Ascending aorta (tissue), 2 donors: ENCODE measurements at regions of chr12 and their contacts with region 1.

Region 1: GRCh38 chr12:89352492-89353187 is at the start of gene DUSP6:
- DNase-seq: peak; percentile 94 to 98
- H3K4me3 ChIP-seq: peak within 1 kb of the TSS; percentile 84 to 98
- H3K27ac ChIP-seq: peak within 1 kb of the TSS; percentile 100
- H3K4me1 ChIP-seq: peaks cover 9 to 23% of the 10 kb centered on the region in 2 donors
- H3K27me3 ChIP-seq: no peaks in the 10 kb centered on the region
- CTCF ChIP-seq: no peak
- total RNA-seq, gene DUSP6: 370 TPM

Region 2: DNA sequence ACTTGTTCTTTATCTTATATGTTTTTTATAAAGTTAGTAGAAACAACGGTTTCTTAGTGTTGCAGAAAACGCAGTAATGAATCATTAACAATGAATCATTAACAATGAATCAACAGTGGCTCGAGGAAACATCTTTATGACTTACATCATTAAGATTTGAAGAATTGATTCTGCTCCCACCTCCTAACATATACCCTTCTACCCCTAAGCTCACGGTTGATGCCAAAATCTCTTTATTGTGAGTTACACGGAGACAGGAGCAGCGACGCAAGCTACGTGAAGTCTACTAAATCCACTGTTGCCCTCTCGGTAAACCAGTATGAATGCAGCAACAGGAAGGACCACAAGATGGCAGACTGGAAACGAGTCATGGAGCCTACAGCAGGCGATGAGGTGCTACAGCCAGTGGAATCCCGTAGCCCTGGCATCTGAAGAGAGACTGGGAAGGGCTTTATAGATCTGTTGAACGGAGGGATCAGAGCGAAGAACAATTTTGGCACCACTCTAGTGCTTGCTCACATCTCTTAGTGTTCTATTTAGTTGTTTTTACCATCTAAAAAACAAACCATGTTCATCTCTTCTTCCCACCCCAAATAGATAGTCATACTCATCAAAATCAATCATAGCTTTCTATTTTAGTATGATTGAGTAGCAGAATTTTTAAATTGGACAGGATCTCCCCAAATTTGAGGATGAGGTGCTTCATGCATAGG is 333.1 kb before region 1 on chr12:
- intact Hi-C with region 1: loop called (anchors 5 kb)
- DNase-seq: peak; percentile 11 to 91
- H3K4me3 ChIP-seq: peak overlapping the region in 1 of 2 donors; percentile 53
- H3K27ac ChIP-seq: no peak overlapping the region
- H3K4me1 ChIP-seq: peaks cover 0 to 4% of the 10 kb centered on the region in 2 donors
- H3K27me3 ChIP-seq: no peaks in the 10 kb centered on the region
- CTCF ChIP-seq: peak; percentile 64 to 84 (median 82)

Region 3: DNA sequence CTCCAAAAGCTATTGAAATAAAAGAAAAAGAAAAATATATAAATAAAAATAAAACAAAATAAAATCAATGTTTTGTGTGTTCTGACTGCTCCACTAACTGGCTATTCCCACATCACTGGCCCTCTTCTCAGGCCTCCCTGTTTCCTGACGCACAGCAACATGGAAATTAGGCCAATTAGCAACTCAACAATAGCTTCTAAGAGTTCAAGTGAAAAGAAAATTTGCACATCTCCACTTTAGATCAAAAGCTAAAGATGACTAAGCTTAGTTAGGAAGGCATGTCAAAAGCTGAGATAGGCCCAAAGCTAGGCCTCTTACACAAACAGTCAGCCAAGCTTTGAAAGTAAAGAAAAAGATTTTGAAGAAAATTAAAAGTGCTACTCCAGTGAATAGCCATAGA is 201.1 kb before region 1 on chr12:
- intact Hi-C with region 1: no loop called
- DNase-seq: no peak
- H3K4me3 ChIP-seq: no peak overlapping the region
- H3K27ac ChIP-seq: no peak overlapping the region
- H3K4me1 ChIP-seq: peaks cover 0 to 5% of the 10 kb centered on the region in 2 donors
- H3K27me3 ChIP-seq: no peaks in the 10 kb centered on the region
- CTCF ChIP-seq: no peak

Region 4: GRCh38 chr12:89162704-89163261 is 189.9 kb before region 1 on chr12:
- intact Hi-C with region 1: loop called (anchors 2 kb)
- DNase-seq: peak; percentile 16 to 85
- H3K4me3 ChIP-seq: no peak overlapping the region
- H3K27ac ChIP-seq: peak overlapping the region; percentile 64 to 65
- H3K4me1 ChIP-seq: peaks cover 0 to 20% of the 10 kb centered on the region in 2 donors
- H3K27me3 ChIP-seq: no peaks in the 10 kb centered on the region
- CTCF ChIP-seq: no peak

Region 5: DNA sequence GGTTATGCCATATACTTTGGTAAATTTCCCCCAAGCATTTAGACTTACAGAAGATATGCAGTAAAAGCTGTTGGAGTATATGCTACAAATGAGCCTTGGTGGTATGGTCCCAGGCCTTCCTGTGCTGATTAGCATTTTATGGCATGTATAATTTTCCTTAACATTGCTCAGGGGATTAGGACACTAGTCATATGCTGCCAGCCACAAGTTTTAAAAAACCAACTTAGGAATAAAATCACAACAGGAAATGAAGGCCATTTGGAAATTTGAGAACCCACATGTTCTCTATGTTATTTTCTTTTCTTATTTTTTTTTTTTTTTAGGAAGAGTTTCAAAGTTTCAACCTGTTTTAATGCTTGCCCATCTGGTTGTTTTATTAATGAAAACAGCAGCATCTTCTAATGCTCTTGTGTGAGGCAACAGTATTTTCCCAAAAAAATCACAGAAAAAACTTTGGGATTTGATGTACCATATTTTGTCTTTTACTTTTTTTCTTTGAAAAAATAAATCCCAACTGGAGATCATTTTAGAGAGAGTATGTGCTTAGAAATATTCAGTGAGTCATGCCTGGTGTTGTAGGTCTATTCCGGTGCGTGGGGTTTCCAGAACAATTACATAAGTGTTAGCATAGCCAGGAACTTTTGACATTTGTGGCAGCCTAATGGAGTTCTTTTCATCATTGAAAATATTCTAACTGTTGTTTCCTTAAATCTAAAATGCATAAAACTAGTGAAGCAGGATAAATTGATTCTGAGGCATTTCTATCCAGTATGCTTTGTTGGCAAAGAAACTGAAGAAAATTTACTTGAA is 21.3 kb after region 1 on chr12:
- intact Hi-C with region 1: loop called (anchors 1 kb)
- DNase-seq: peak in 1 of 2 donors; percentile 75
- H3K4me3 ChIP-seq: no peak overlapping the region
- H3K27ac ChIP-seq: peak overlapping the region; percentile 71 to 74
- H3K4me1 ChIP-seq: peaks cover 5 to 20% of the 10 kb centered on the region in 2 donors
- H3K27me3 ChIP-seq: no peaks in the 10 kb centered on the region
- CTCF ChIP-seq: no peak

Region 6: DNA sequence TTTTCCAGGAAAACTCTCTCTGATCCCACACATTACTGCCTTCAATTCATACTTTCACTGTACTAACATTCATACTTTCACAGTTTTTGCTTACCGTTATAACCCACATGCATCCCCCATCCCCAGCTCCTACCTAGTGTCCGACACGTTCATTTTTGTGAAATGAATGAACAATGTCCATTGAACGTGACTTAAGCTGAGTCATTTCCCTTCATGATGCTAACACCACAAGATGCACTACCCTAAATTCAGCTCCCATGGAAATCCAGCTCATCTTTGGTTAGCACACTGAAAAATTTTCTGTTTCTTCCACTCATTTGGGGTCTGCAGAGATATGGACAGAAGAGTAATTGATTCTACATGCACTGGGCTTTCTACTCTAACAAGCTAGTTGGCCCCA is 87.3 kb after region 1 on chr12:
- intact Hi-C with region 1: no loop called
- DNase-seq: no peak
- H3K4me3 ChIP-seq: no peak overlapping the region
- H3K27ac ChIP-seq: no peak overlapping the region
- H3K4me1 ChIP-seq: no peaks in the 10 kb centered on the region
- H3K27me3 ChIP-seq: no peaks in the 10 kb centered on the region
- CTCF ChIP-seq: no peak

Region 7: DNA sequence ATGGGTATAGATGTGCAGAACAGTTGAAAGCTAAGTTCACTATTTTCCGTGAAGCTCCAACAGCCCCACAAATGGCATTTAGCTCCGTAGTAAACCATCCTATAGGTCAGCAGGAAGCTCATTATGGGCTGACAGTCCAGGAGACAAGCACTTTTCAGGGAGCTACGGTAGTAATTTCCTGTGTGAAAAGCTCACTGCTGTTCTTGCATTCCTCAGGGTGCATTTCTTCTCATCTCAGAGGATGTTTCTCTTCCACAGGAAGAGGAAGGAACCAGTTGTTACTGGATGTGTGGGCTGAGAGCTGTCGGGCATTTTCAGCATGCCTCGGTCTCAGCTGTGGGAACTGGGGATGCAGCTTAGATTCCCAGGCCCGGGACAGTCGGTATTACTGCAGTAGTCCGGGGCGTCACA is 99.2 kb after region 1 on chr12:
- intact Hi-C with region 1: loop called (anchors 1 kb)
- DNase-seq: peak in 1 of 2 donors; percentile 69
- H3K4me3 ChIP-seq: peak overlapping the region in 1 of 2 donors; percentile 47
- H3K27ac ChIP-seq: peak overlapping the region; percentile 80 to 82
- H3K4me1 ChIP-seq: peaks cover 14 to 26% of the 10 kb centered on the region in 2 donors
- H3K27me3 ChIP-seq: no peaks in the 10 kb centered on the region
- CTCF ChIP-seq: no peak

Region 8: DNA sequence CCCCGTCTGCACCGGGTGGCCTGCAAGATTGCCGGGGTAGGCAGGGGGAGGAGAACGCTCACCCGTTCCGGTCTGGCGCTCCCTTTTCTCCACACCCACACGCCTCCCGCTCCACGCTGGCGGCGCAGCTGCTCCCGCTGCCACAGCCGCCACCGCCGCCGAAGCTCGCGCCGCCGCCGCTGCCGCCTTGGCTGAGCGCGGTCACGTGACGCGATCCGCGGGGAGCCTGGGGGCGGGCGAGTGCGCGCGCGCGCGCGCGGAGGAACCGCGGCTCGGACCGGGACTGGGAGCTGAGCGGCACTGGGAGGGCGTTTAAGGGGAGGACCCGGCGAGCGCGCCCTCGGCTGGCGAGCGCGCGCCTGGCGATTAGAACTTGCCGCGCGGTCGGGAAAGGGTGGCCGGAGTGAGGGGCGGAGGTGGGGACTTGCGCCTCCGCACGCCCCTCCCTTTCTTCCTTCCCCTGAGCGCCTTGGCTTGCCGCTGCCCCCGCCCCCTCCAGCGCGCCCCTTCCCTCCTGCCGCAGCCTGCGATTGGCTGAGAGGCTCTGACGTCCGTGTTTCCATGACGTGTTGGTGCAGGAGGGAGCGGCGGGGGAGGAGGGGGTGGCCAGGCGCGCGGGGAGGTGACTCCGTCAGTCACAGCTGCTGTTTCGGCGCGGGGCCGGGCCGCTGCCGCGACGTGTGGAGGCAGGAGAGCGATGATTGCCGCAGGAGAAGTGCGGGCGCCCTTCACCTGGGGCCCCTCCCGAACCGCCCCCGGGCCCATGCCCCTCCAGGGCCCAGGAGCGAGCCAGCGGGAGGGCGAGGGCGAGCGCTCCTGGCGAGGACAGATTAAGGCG is 356.7 kb after region 1 on chr12:
- intact Hi-C with region 1: loop called (anchors 2 kb)
- DNase-seq: peak; percentile 91 to 99
- H3K4me3 ChIP-seq: peak overlapping the region; percentile 81 to 91
- H3K27ac ChIP-seq: peak overlapping the region; percentile 98
- H3K4me1 ChIP-seq: peaks cover 0 to 5% of the 10 kb centered on the region in 2 donors
- H3K27me3 ChIP-seq: no peaks in the 10 kb centered on the region
- CTCF ChIP-seq: peak in 1 of 3 experiments; percentile 12